ENCODE measurements at regions of chr20 and their contacts with region 1.

Region 1: GRCh38 chr20:36605399-36606157 is at the start of gene RAB5IF:
- DNase-seq: peak; percentile 97
- ATAC-seq: peak; percentile 88
- H3K4me3 ChIP-seq: peak within 1 kb of the TSS; percentile 76 to 100
- H3K27ac ChIP-seq: peak within 1 kb of the TSS; percentile 88
- H3K4me1 ChIP-seq: peaks cover 23 to 30% of the 10 kb centered on the region in 2 experiments
- H3K27me3 ChIP-seq: no peaks in the 10 kb centered on the region
- CTCF ChIP-seq: peak; percentile 75 to 86 (median 83)
- POLR2A ChIP-seq: peak; percentile 86
- RAD21 ChIP-seq: peak; percentile 67
- total RNA-seq, gene RAB5IF: 82.9 TPM

Region 2: DNA sequence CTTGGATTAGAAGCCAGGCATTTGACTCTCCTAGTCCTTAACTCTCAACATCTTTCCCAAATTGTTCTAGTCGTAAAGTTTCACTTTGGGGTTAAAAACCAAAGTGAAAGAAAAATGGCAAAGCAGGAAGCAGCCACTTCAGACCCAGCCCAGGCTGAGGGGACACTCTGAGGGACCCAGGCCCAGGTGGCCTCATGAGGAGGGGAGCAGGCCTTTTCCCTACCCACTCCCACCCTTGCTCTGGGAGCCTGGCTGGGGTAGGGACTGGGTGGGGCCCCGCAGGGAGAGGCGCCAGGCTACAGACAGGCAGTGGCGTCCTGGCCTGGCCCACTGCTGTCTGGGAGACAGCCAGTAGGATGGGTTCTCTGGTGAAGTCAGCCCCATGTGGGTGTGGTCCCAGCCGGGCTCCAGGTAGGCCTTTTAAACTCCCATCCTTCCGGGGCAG is 132.9 kb before region 1 on chr20:
- CTCF ChIA-PET with region 1: no interaction called
- POLR2A ChIA-PET with region 1: no interaction called
- RAD21 ChIA-PET with region 1: no interaction called
- intact Hi-C with region 1: loop called (anchors 10 kb)
- DNase-seq: peak; percentile 52
- ATAC-seq: peak; percentile 99
- H3K4me3 ChIP-seq: peak overlapping the region; percentile 16 to 46
- H3K27ac ChIP-seq: peak overlapping the region; percentile 48
- H3K4me1 ChIP-seq: peaks cover 34 to 66% of the 10 kb centered on the region in 2 experiments
- H3K27me3 ChIP-seq: no peaks in the 10 kb centered on the region
- CTCF ChIP-seq: no peak
- POLR2A ChIP-seq: no peak
- RAD21 ChIP-seq: no peak

Region 3: DNA sequence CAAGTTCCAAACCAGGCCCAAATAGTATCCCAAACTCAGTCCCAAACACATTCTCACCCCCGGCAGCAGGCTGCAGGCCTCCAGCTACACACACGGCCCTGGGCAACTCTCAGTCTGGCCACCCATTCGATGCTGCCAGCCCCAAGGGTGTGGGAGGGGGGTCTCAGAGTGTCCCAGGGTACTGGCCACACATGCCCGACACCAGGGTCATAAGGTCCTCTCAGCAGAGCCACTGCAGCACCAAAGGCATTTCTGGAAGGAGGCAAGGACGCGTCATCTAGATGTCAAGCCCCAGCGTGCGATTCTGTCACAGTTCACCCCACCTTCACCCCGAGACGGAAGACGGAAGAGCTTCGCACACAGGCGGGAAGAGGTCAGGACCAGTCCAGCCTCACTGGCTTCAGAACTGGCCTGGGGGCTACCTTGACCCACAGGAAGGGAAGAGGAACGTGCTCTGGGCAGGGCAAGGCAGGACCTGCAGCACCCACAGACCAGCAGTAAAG is 54.7 kb before region 1 on chr20:
- CTCF ChIA-PET with region 1: no interaction called
- POLR2A ChIA-PET with region 1: no interaction called
- RAD21 ChIA-PET with region 1: no interaction called
- intact Hi-C with region 1: loop called (anchors 1 kb)
- DNase-seq: no peak
- ATAC-seq: 0 out of 2 replicates have a peak, but pooled peaks have one; percentile 23
- H3K4me3 ChIP-seq: no peak overlapping the region
- H3K27ac ChIP-seq: no peak overlapping the region
- H3K4me1 ChIP-seq: no peaks in the 10 kb centered on the region
- H3K27me3 ChIP-seq: no peaks in the 10 kb centered on the region; the same call in 1 of the 2 replicates
- CTCF ChIP-seq: no peak
- POLR2A ChIP-seq: no peak
- RAD21 ChIP-seq: no peak

Region 4: GRCh38 chr20:36591854-36592641 is 13.5 kb before region 1 on chr20:
- CTCF ChIA-PET with region 1: interaction called, 12 read pairs
- POLR2A ChIA-PET with region 1: interaction called, 13 read pairs
- RAD21 ChIA-PET with region 1: interaction called in 1 of 2 experiments, 3 read pairs
- intact Hi-C with region 1: no loop called
- DNase-seq: peak; percentile 22
- ATAC-seq: peak; percentile 74
- H3K4me3 ChIP-seq: no peak overlapping the region
- H3K27ac ChIP-seq: no peak overlapping the region
- H3K4me1 ChIP-seq: peaks cover 5 to 9% of the 10 kb centered on the region in 2 experiments; a peak in 3 of 4 replicates
- H3K27me3 ChIP-seq: no peaks in the 10 kb centered on the region
- CTCF ChIP-seq: peak; percentile 49 to 60 (median 55); a peak in 5 of 6 replicates
- POLR2A ChIP-seq: no peak
- RAD21 ChIP-seq: peak; percentile 47

Measured in HCT116 (cell line).